ENCODE measurements at regions of chr3 and their contacts with region 1.

Region 1: GRCh38 chr3:123476967-123477750 is 28.3 kb upstream of the ADCY5 start:
- DNase-seq: no peak
- CTCF ChIP-seq: no peak

Region 2: DNA sequence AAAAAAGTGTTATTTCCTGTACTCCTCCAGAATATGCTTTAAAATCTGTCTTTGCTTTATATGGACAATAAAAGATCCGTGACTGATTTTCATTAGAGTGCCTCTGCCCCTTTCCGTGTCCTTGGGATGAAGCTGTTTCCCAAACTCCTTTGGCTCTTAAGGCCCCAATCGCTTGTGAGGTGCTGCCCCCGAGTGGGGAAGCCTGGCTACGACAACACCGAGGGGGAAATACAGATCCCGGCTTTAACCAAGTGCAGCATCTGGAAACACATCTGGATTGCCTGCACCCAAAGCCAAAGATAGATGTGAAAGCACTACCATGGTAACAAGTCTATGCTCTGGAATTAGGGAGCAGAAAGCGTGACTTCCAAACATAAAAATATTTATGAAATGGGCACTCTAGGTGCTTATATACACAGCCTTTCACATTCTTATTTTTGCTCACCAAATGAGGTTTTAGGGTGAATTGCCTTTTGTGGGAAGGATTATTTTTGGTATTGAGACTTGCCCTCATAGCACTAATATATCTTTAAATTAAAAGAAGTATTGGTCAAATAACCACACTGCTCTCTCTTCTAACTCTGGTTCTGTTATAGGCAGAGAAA is 12.3 kb after region 1 on chr3:
- CTCF ChIA-PET with region 1: interaction called, 12 read pairs
- POLR2A ChIA-PET with region 1: no interaction called
- DNase-seq: peak; percentile 62
- CTCF ChIP-seq: peak; percentile 90